HEK293 (cell line): ENCODE measurements at regions of chr10 and their contacts with region 1.

Region 1: DNA sequence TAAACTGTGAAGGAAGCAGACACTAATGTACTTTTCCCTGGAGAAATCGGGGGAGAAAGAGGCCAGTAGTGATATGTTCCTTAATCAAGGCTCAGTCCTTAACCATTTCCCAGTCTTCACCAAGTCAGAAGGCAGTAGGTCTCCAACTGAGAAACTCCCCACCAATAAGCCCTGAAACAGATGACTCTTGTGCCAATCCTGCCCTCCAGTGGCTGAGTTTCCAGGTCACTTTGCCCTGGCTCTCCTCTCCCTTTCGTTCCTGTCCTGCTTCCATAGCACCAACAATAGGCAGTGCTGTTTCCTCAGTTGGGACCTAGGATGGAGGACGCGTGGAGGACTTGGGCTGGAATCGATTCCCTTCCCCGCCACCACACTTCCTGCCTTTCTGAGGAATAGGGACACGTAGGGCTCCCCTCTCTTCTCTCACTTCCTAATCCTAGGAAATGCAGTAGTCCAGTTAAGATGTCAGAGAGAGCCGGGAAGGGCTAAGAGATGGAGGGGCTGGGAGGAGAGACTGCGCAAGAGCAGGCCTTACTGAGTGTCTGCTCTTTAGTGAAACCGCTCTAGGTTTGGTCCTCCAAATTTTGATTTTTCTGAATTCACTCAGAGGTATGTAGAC is 23.4 kb downstream of the ATOH7 start:
- H3K4me3 ChIP-seq: no peak overlapping the region
- H3K27ac ChIP-seq: no peak overlapping the region
- H3K4me1 ChIP-seq: no peaks in the 10 kb centered on the region
- CTCF ChIP-seq: peak; percentile 95

Region 2: DNA sequence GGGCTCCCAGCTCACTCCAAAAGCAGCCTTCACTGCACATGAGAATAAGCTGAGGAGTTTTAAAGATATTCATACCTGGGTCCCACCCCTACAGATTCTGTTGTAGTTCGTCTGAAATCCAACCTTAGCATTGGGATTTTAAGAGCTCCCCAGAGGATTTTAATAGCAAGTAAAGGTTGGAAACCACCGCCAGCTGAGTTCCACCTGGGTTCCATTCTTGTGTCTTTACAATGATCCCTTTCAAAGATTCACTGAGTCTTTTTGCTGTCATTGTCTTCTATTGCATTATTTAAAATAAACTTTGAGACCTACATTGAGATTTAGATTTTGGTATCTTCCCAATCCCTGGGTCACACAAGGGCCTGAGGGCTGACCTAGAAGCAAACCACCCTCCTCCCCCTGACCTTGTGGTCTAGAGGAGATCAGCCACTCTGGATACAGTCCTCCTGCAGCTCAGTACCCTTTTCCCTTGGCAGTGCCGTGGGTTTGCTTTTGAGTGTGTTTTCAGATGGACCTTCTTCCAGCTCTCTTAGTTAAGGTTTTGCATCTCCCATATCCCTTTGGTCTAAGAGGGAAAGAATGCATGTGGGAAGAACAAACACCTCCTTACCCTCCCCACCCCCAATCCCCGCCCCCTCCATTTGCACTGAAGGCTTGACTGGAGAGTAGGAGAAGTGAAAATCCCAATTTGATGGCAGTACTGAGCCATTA is 346.6 kb before region 1 on chr10:
- CTCF ChIA-PET with region 1: interaction called, 28 read pairs
- POLR2A ChIA-PET with region 1: no interaction called
- H3K4me3 ChIP-seq: no peak overlapping the region
- H3K27ac ChIP-seq: no peak overlapping the region
- H3K4me1 ChIP-seq: peaks cover 2% of the 10 kb centered on the region; the same call in 1 of the 2 replicates
- CTCF ChIP-seq: no peak

Region 3: DNA sequence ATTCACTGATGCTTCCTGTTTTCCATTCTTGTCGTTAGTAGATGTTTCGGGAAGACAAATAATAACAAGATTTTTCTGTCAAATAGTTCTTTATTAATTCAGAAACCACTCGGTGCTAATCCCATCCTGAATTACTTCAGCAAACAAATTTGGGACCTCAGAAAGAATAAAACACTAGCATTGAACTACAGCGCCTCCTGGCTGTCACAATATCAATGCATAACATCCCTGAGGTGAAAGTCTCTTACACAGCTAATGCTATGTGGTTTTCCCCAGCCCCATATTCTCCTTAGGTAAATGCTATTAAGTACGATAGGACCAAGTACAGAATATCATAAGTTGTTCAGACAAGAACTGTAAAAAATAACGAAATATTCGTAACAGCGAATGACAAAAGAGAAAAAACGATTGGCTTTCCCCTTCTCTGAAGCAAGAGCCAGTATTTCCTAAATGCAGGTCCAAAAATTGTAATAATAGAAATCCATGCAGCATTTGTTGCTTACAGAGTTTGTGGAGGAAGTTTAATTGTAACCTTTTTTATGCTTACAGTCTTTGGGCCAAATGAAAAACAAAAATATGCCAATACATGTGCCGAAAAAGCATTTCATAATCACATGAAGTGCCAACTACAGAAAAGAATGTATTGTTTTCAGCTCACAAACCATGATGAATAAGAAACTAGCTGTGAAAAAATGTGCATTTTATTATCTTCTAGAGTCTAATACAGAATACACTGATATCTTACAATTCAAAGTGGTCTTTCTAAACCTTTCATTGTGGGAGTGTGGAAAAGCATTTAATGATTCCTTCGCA is 52.0 kb before region 1 on chr10:
- CTCF ChIA-PET with region 1: interaction called, 18 read pairs
- POLR2A ChIA-PET with region 1: no interaction called
- H3K4me3 ChIP-seq: no peak overlapping the region
- H3K27ac ChIP-seq: no peak overlapping the region
- H3K4me1 ChIP-seq: 0 out of 2 replicates have a peak, but pooled peaks cover 11% of the 10 kb centered on the region
- CTCF ChIP-seq: peak; percentile 62

Region 4: DNA sequence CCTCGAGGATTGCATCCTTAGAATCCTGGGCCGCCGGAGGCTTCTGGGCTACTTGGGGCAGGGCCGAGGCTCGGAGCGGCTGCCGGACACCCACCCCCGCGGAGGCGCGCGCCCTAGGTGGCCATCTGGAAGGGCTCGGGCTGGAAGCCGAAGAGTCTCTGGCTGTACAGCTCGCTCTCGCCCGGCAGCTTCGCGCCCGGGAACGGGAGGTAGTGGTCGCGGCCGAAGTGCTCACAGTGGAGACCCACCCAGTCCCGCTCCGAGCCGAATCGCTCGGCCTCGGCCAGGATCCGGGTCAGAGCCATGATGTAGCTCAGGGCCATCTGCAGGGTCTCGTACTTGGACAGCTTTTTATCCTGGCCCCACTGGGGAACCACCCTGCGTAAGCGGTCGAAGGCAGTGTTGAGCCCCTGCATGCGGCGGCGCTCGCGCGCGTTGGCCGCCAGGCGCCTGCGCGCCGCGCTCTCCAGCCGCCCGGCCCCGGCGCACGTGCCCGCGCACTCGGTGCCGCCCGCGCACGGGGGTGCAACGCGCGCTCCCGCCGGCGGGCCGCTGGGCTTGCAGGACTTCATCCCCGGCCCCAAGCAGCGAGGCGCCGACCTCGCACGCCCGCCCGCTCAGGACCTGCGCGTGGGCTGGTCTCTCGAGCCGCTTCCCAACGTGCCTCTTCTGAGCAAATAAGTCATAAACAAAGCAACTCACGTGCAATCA is 22.7 kb after region 1 on chr10:
- CTCF ChIA-PET with region 1: interaction called, 30 read pairs
- POLR2A ChIA-PET with region 1: no interaction called
- H3K4me3 ChIP-seq: peak overlapping the region; percentile 54
- H3K27ac ChIP-seq: peak overlapping the region; percentile 68; the same call in 1 of the 2 replicates
- H3K4me1 ChIP-seq: peaks cover 3% of the 10 kb centered on the region; the same call in 1 of the 2 replicates
- CTCF ChIP-seq: peak; percentile 65

Region 5: GRCh38 chr10:68331455-68332258 is 123.1 kb after region 1 on chr10 and contains the start of gene HNRNPH3:
- CTCF ChIA-PET with region 1: interaction called, 3 read pairs
- POLR2A ChIA-PET with region 1: interaction called, 14 read pairs
- H3K4me3 ChIP-seq: peak within 1 kb of the TSS; percentile 89
- H3K27ac ChIP-seq: peak within 1 kb of the TSS; percentile 97
- H3K4me1 ChIP-seq: peaks cover 9% of the 10 kb centered on the region
- CTCF ChIP-seq: peak; percentile 25; the same call in 1 of the 2 replicates